ENCODE measurements at regions of chr3 and their contacts with region 1.

Region 1: GRCh38 chr3:136559896-136560295 is 192.3 kb downstream of the STAG1 start:
- DNase-seq: no peak
- ATAC-seq: no peak
- H3K4me3 ChIP-seq: no peak overlapping the region
- H3K27ac ChIP-seq: no peak overlapping the region
- H3K4me1 ChIP-seq: no peaks in the 10 kb centered on the region
- H3K27me3 ChIP-seq: no peaks in the 10 kb centered on the region
- CTCF ChIP-seq: no peak
- EP300 ChIP-seq: no peak
- POLR2A ChIP-seq: no peak
- RAD21 ChIP-seq: no peak

Region 2: GRCh38 chr3:136728918-136729317 is 169.0 kb after region 1 on chr3:
- CTCF ChIA-PET with region 1: no interaction called
- POLR2A ChIA-PET with region 1: no interaction called
- in situ Hi-C with region 1: loop called (anchors 25 kb)
- intact Hi-C with region 1: no loop called
- DNase-seq: no peak
- ATAC-seq: no peak
- H3K4me3 ChIP-seq: no peak overlapping the region
- H3K27ac ChIP-seq: no peak overlapping the region
- H3K4me1 ChIP-seq: peaks cover 71% of the 10 kb centered on the region
- H3K27me3 ChIP-seq: no peaks in the 10 kb centered on the region
- CTCF ChIP-seq: no peak
- EP300 ChIP-seq: no peak
- POLR2A ChIP-seq: no peak
- RAD21 ChIP-seq: no peak

Measured in HepG2 (cell line).